AG04449 (cell line): ENCODE measurements at regions of chr12 and their contacts with region 1.

Region 1: GRCh38 chr12:71746983-71747611 is 7.6 kb upstream of the RAB21 start:
- DNase-seq: peak; percentile 14
- H3K4me3 ChIP-seq: no peak overlapping the region
- CTCF ChIP-seq: peak; percentile 67

Region 2: GRCh38 chr12:71626098-71626497 is 121.0 kb before region 1 on chr12:
- CTCF ChIA-PET with region 1: interaction called, 26 read pairs
- POLR2A ChIA-PET with region 1: no interaction called
- DNase-seq: no peak
- H3K4me3 ChIP-seq: no peak overlapping the region
- CTCF ChIP-seq: no peak

Region 3: GRCh38 chr12:71645268-71645667 is 101.8 kb before region 1 on chr12:
- CTCF ChIA-PET with region 1: interaction called, 95 read pairs
- POLR2A ChIA-PET with region 1: no interaction called
- DNase-seq: no peak
- H3K4me3 ChIP-seq: no peak overlapping the region
- CTCF ChIP-seq: no peak

Region 4: DNA sequence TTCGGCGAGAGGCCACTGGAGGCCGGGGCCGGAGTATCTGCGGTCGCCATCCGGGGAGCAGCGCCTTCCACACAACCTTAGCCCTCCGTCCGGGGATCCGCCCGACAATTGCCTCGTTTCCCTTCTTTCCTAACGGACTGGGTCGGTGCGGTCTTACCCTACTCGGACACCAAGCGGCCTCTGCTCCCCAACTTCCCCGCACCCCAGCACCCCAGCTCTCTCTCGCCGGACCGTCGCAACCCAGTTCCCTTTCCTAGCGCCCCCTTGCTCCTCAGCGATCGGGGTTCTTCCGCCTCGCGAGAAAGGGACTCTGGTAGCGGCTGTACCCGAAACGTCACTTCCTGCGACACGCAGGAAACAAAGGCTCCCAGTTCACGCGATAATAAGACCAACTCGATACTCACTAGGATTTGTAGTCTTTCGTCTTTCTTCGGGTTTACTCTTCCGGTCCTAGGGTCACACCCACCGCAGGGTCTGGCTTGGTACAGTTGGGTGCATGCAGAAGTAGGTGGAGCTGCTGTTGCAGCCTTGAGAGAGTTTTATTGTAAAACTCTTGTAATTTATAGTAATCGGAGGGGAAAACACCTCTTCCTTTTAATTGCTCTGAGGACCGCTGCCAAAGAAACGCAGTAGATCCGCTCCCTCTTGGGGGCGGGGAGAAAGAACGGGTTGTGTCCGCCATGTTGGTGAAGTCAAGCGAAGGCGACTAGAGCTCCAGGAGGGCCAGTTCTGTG is 83.4 kb before region 1 on chr12 and contains the start of gene ZFC3H1:
- CTCF ChIA-PET with region 1: interaction called, 33 read pairs
- POLR2A ChIA-PET with region 1: interaction called, 5 read pairs
- DNase-seq: peak; percentile 99
- H3K4me3 ChIP-seq: peak within 1 kb of the TSS; percentile 88
- CTCF ChIP-seq: peak; percentile 59

Region 5: DNA sequence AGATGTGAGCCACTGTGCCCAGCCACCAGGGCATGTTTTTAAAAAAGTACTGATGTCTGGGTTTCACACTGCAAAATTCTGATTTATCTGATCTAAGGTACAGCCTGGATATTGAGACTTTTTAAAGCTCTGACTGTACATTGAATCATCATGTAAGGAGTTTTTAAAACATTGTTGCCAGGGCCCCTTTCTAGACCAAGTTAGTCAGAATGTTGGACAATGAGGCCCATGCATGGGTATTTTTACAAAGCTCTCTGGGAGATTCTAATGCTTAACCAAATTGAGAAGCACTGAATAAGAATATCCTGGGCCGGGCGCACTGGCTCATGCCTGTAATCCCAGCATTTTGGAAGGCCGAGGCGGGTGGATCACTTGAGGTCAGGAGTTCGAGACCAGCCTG is 44.5 kb before region 1 on chr12:
- CTCF ChIA-PET with region 1: interaction called, 11 read pairs
- POLR2A ChIA-PET with region 1: no interaction called
- DNase-seq: no peak
- H3K4me3 ChIP-seq: no peak overlapping the region
- CTCF ChIP-seq: no peak

Region 6: GRCh38 chr12:71731751-71732712 is 15.1 kb before region 1 on chr12:
- CTCF ChIA-PET with region 1: interaction called, 57 read pairs
- POLR2A ChIA-PET with region 1: no interaction called
- DNase-seq: no peak
- H3K4me3 ChIP-seq: no peak overlapping the region
- CTCF ChIP-seq: no peak

Region 7: DNA sequence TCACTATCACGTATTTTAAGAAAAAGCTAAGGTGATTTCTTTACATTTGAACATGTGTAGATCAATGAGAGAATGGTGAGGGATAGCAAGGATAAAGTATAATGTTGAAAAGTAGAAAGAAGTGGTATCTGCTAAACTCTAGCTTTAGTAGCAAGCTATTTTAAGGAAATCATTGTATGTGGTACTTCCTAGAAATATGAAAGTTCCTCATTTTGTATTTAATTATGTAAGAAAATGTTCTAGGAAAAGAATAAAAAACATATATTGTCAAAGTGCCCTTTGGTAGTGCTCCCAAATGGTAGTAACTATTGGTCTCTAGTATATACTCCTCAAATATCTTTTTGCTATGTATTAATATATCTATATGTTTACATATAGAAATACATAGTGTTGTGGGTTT is 43.2 kb after region 1 on chr12:
- CTCF ChIA-PET with region 1: no interaction called
- POLR2A ChIA-PET with region 1: no interaction called
- DNase-seq: no peak
- H3K4me3 ChIP-seq: no peak overlapping the region
- CTCF ChIP-seq: no peak